ENCODE measurements at regions of chr3 and their contacts with region 1.

Region 1: GRCh38 chr3:68972358-68972979 is 40.1 kb upstream of the TAFA4 start:
- DNase-seq: peak; percentile 63
- ATAC-seq: peak; percentile 99
- H3K4me3 ChIP-seq: no peak overlapping the region
- H3K27ac ChIP-seq: no peak overlapping the region
- H3K4me1 ChIP-seq: no peaks in the 10 kb centered on the region
- H3K27me3 ChIP-seq: peaks cover 2 to 23% of the 10 kb centered on the region in 2 experiments; a peak in 4 of 5 replicates
- CTCF ChIP-seq: peak; percentile 94
- EP300 ChIP-seq: no peak
- POLR2A ChIP-seq: no peak
- RAD21 ChIP-seq: peak; percentile 88

Region 2: DNA sequence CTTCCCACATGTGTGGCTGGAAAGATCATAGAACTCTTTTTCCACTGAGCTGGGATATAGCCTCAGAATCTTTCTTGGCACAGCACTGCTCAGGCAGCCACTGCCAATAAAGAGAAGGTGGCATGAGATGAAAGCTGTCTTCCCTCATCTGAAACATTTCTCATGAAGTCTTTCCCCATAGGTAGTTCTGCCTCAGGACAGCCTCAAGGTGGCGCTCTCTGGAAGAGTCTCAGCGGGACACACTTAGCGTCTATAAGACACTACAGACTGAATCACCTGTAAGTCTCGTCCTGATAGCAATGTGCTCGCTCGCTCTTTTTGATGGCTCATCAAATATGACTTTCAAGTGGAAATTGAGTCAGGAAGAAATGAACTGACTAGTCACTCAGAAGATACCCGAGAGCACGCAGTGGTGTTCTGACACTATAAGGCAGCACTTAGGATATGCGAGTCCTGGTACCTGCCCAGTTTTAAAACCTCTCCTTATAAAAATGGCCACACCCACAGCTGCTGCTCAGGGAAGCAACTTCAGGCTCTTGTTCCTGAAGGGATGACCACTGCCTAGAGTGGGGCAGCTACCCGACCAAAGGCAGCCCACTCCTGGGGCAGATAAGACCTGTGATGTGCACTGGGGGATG is 1587.6 kb before region 1 on chr3:
- CTCF ChIA-PET with region 1: no interaction called
- POLR2A ChIA-PET with region 1: no interaction called
- in situ Hi-C with region 1: no loop called
- intact Hi-C with region 1: loop called (anchors 5 kb)
- DNase-seq: peak; percentile 23
- ATAC-seq: peak; percentile 82
- H3K4me3 ChIP-seq: no peak overlapping the region
- H3K27ac ChIP-seq: no peak overlapping the region
- H3K4me1 ChIP-seq: no peaks in the 10 kb centered on the region
- H3K27me3 ChIP-seq: no peaks in the 10 kb centered on the region
- CTCF ChIP-seq: peak; percentile 64
- EP300 ChIP-seq: no peak
- POLR2A ChIP-seq: no peak
- RAD21 ChIP-seq: no peak

Region 3: DNA sequence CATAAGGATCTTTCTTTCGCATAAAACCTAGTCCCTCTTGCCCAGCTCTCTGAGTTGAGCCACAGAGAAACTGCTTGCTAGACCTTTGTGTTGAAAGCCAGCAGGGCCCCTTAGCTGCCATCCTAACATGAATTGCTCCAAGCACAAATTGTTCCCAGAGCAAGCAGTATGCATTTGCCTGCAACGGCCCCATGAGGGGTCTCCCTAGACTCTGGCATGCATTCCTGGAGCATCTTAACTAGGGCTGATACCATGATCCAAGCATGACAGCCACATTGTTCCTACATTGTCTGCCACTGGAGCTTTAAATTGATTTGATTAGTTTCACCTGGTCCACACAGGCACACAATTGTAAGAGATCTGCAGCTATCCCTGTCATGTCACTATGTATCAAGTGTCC is 468.3 kb before region 1 on chr3:
- CTCF ChIA-PET with region 1: no interaction called
- POLR2A ChIA-PET with region 1: no interaction called
- in situ Hi-C with region 1: no loop called
- intact Hi-C with region 1: no loop called
- DNase-seq: no peak
- ATAC-seq: no peak
- H3K4me3 ChIP-seq: no peak overlapping the region
- H3K27ac ChIP-seq: no peak overlapping the region
- H3K4me1 ChIP-seq: no peaks in the 10 kb centered on the region
- H3K27me3 ChIP-seq: no peaks in the 10 kb centered on the region
- CTCF ChIP-seq: no peak
- EP300 ChIP-seq: no peak
- POLR2A ChIP-seq: no peak
- RAD21 ChIP-seq: no peak

Region 4: GRCh38 chr3:68876112-68876713 is 96.3 kb before region 1 on chr3:
- CTCF ChIA-PET with region 1: interaction called, 3 read pairs
- POLR2A ChIA-PET with region 1: no interaction called
- in situ Hi-C with region 1: no loop called
- intact Hi-C with region 1: loop called (anchors 1 kb)
- DNase-seq: peak; percentile 31
- ATAC-seq: peak; percentile 76
- H3K4me3 ChIP-seq: no peak overlapping the region
- H3K27ac ChIP-seq: no peak overlapping the region
- H3K4me1 ChIP-seq: no peaks in the 10 kb centered on the region
- H3K27me3 ChIP-seq: peaks cover 0 to 3% of the 10 kb centered on the region in 2 experiments; a peak in 1 of 5 replicates
- CTCF ChIP-seq: peak; percentile 80
- EP300 ChIP-seq: no peak
- POLR2A ChIP-seq: no peak
- RAD21 ChIP-seq: 0 out of 2 replicates have a peak, but pooled peaks have one; percentile 50

Region 5: GRCh38 chr3:68893600-68894239 is 78.7 kb before region 1 on chr3:
- CTCF ChIA-PET with region 1: interaction called, 19 read pairs
- POLR2A ChIA-PET with region 1: no interaction called
- in situ Hi-C with region 1: loop called (anchors 5 kb)
- intact Hi-C with region 1: loop called (anchors 1 kb)
- DNase-seq: peak; percentile 18
- ATAC-seq: no peak
- H3K4me3 ChIP-seq: no peak overlapping the region
- H3K27ac ChIP-seq: no peak overlapping the region
- H3K4me1 ChIP-seq: peaks cover 6% of the 10 kb centered on the region; the same call in 1 of the 2 replicates
- H3K27me3 ChIP-seq: no peaks in the 10 kb centered on the region
- CTCF ChIP-seq: peak; percentile 42
- EP300 ChIP-seq: no peak
- POLR2A ChIP-seq: no peak
- RAD21 ChIP-seq: no peak

Region 6: DNA sequence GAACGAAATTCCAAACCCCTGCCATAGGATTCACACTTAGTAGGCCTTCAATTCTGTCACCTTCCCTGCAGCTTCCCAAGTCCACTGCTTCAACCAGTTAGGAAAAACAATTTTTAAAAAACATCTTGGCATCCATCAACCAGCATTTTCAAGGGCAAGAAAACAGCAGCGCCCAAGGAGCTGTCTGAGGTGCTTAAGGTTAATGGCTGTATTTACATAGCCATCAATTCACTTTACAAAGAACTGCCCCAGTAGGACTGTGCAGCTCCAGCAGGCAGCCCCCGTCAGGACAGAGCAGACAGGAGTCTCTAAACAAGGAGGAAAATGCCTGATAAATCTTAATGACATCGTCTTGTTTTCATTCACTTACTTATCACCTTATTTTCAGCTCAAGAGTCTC is 53.5 kb before region 1 on chr3:
- CTCF ChIA-PET with region 1: no interaction called
- POLR2A ChIA-PET with region 1: no interaction called
- in situ Hi-C with region 1: no loop called
- intact Hi-C with region 1: loop called (anchors 2 kb)
- DNase-seq: no peak
- ATAC-seq: no peak
- H3K4me3 ChIP-seq: no peak overlapping the region
- H3K27ac ChIP-seq: no peak overlapping the region
- H3K4me1 ChIP-seq: peaks cover 14% of the 10 kb centered on the region
- H3K27me3 ChIP-seq: 0 out of 5 replicates have a peak, but pooled peaks cover 0 to 6% of the 10 kb centered on the region in 2 experiments
- CTCF ChIP-seq: no peak
- EP300 ChIP-seq: no peak
- POLR2A ChIP-seq: no peak
- RAD21 ChIP-seq: no peak

Region 7: DNA sequence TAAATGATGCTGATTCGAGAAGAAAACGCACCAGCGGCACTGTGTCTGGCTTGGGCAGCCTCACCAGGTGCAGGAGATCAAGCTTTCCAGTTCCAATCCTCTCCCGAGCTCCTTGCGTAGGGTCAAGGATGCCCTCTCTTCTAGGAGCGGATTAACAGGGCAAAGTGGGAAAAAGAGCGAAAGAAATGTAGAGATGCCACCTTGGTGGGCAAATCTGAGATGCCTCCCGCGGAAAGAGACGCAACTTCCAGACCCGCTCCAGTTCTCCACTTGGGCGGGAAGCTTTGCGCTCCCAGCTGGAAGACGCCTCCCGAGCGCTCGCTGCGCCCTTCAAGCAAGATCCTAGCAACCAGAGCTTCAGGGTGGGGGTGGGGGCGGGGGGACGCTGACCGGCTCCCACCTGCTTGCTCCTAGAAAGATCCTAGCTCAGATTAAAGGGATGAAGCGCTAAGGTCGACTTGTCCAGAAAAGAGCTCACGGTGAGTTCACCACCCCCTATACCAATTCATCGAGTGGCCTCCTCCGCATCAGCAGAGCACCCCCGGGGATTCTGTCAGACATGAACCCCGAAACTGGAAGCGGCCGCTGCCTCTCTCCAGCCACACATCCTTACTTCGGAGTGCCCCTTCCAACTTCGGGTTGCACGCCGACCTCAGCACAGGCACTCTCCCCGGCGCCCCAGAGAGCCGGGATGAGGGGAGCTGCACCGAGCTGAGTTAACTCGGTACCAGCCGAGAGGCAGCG is 40.9 kb before region 1 on chr3:
- CTCF ChIA-PET with region 1: no interaction called
- POLR2A ChIA-PET with region 1: no interaction called
- in situ Hi-C with region 1: no loop called
- intact Hi-C with region 1: loop called (anchors 1 kb)
- DNase-seq: no peak
- ATAC-seq: no peak
- H3K4me3 ChIP-seq: peak overlapping the region in 1 of 3 experiments; percentile 50; a peak in 1 of 6 replicates
- H3K27ac ChIP-seq: no peak overlapping the region
- H3K4me1 ChIP-seq: peaks cover 12% of the 10 kb centered on the region
- H3K27me3 ChIP-seq: peaks cover 1 to 21% of the 10 kb centered on the region in 2 experiments
- CTCF ChIP-seq: no peak
- EP300 ChIP-seq: no peak
- POLR2A ChIP-seq: no peak
- RAD21 ChIP-seq: no peak

Region 8: GRCh38 chr3:68996356-68996995 is 24.0 kb after region 1 on chr3:
- CTCF ChIA-PET with region 1: no interaction called
- POLR2A ChIA-PET with region 1: no interaction called
- in situ Hi-C with region 1: no loop called
- intact Hi-C with region 1: no loop called
- DNase-seq: no peak
- ATAC-seq: no peak
- H3K4me3 ChIP-seq: no peak overlapping the region
- H3K27ac ChIP-seq: no peak overlapping the region
- H3K4me1 ChIP-seq: no peaks in the 10 kb centered on the region
- H3K27me3 ChIP-seq: no peaks in the 10 kb centered on the region; a peak in 1 of 5 replicates
- CTCF ChIP-seq: no peak
- EP300 ChIP-seq: no peak
- POLR2A ChIP-seq: no peak
- RAD21 ChIP-seq: no peak

Measured in HepG2 (cell line).